Dendritic cell treated with granulocyte-macrophage colony-stimulating factor and Interleukin-4, amounts not matched to agents 40 ng/mL and 50 ng/mL, for 4 days (primary cell): ENCODE measurements at regions of chr17 and their contacts with region 1.

Region 1: DNA sequence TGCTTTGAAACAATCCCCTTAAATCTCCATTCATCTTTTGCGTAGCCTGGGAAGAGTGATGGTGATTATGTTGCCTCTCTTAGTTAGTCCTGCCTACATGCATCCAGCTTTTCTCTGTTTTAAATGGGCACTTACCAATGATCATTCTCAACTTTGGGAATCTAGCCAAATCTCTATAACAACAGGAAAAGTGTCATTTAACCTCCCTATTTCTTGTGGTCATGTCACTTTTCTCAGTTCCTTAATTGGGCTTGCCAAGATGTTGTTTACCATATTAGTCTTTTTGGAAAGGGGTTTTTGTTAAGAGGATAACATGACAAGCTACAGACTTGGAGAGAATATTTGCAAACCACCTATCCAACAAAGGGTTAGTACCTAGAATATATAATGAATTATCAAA is 15.6 kb upstream of the CLEC10A start:
- H3K4me3 Mint-ChIP-seq: peak overlapping the region; percentile 56
- H3K27ac Mint-ChIP-seq: peak overlapping the region; percentile 92
- H3K4me1 Mint-ChIP-seq: peaks cover 83% of the 10 kb centered on the region
- H3K27me3 Mint-ChIP-seq: no peaks in the 10 kb centered on the region

Region 2: GRCh38 chr17:7081341-7082062 is 14.1 kb before region 1 on chr17:
- intact Hi-C with region 1: loop called (anchors 2 kb)
- H3K4me3 Mint-ChIP-seq: no peak overlapping the region
- H3K27ac Mint-ChIP-seq: no peak overlapping the region
- H3K4me1 Mint-ChIP-seq: peaks cover 69% of the 10 kb centered on the region
- H3K27me3 Mint-ChIP-seq: no peaks in the 10 kb centered on the region

Region 3: GRCh38 chr17:7122381-7122780 is 26.8 kb after region 1 on chr17:
- intact Hi-C with region 1: loop called (anchors 2 kb)
- H3K4me3 Mint-ChIP-seq: no peak overlapping the region
- H3K27ac Mint-ChIP-seq: peak overlapping the region; percentile 83
- H3K4me1 Mint-ChIP-seq: peaks cover 77% of the 10 kb centered on the region
- H3K27me3 Mint-ChIP-seq: no peaks in the 10 kb centered on the region